Caco-2 (cell line): ENCODE measurements at regions of chr11 and their contacts with region 1.

Region 1: DNA sequence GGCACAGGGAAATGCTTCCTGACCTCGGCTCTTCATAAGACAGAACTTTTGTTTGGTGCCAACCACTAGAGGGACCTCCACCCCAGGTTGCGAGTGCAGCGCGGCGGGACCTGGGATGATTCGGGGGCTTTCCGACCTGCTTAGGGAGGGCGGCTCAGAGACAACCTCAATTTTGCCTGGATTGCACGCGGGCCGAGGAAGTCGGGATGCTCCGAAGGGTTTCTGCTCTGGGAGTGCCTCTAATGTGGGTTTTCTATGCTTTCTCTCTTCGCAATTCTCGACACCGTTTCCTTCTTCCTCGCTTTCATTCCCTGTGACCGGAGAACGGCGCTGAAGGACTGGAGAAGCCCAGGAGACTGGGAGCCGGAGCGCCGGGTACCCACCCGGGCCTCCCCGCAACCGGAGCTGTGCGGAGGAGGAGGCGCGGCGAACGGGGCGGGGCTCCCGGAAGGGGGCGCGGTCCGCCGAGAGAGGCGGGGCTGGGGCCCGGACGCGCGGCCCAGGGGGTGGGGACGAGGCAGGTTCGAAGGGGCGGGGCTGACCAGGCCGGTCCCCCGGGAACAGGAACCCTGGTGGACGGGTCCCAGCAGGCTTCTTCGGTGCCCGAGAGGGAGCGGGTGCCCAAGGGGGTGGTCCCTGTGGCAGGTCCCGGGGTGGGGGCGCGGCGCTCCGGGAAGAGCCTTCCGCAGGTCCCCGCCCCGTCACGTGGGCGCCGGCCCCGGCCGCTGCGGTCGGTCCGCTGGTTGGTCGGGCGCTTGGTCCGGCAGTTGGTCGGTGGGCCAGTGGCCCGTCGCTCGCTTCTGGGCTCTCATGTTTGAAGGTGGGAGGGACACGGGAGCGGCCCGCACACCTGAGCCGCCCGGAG is at the start of gene PPFIBP2:
- DNase-seq: peak; percentile 79 to 90
- H3K4me3 ChIP-seq: peak within 1 kb of the TSS; percentile 87
- H3K4me3 Mint-ChIP-seq: peak within 1 kb of the TSS; percentile 80
- H3K27ac Mint-ChIP-seq: no peak within 1 kb of the TSS
- H3K4me1 ChIP-seq: 0 out of 2 replicates have a peak, but pooled peaks cover 5% of the 10 kb centered on the region
- H3K4me1 Mint-ChIP-seq: peaks cover 16% of the 10 kb centered on the region
- H3K27me3 ChIP-seq: no peaks in the 10 kb centered on the region
- H3K27me3 Mint-ChIP-seq: no peaks in the 10 kb centered on the region
- CTCF ChIP-seq: peak; percentile 67 to 79
- total RNA-seq, gene PPFIBP2: 72.5 and 79.8 TPM in 2 replicates

Region 2: DNA sequence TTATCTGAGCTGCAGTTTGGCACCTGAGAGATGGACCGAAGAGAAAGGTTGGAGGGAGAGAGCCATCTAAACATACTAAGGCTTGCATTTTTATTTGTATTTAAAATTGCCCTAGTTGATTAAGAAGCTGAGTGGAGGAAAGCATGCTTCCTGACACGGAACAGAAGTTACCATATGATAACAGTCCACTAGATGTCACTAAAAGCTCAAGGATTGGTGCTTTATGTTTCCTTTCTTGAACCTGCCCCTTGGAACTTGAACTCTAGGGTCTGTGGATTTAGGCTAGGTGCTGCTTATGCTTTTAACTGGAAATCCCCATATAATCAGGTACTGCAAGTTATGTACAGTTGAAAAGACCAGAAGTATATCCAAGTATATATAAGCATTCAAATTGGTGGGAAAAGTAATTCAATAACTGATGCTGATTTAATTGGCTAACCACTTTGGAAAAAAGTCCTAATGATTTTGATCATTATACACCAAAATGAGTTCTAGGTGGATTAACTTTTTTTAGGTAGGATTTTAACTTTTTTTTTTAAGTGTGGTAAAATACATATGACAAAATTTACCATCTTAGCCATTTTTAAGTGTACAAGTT is 415.1 kb before region 1 on chr11:
- CTCF ChIA-PET with region 1: no interaction called
- POLR2A ChIA-PET with region 1: no interaction called
- intact Hi-C with region 1: no loop called
- DNase-seq: peak in 1 of 2 experiments; percentile 54
- H3K4me3 ChIP-seq: no peak overlapping the region
- H3K4me3 Mint-ChIP-seq: no peak overlapping the region
- H3K27ac Mint-ChIP-seq: no peak overlapping the region
- H3K4me1 ChIP-seq: no peaks in the 10 kb centered on the region
- H3K4me1 Mint-ChIP-seq: no peaks in the 10 kb centered on the region
- H3K27me3 ChIP-seq: no peaks in the 10 kb centered on the region
- H3K27me3 Mint-ChIP-seq: peaks cover 3% of the 10 kb centered on the region
- CTCF ChIP-seq: peak; percentile 55 to 62

Region 3: GRCh38 chr11:7538031-7538430 is 24.6 kb after region 1 on chr11:
- CTCF ChIA-PET with region 1: interaction called, 4 read pairs
- POLR2A ChIA-PET with region 1: interaction called, 3 read pairs
- intact Hi-C with region 1: loop called (anchors 1 kb)
- DNase-seq: no peak
- H3K4me3 ChIP-seq: no peak overlapping the region
- H3K4me3 Mint-ChIP-seq: no peak overlapping the region
- H3K27ac Mint-ChIP-seq: peak overlapping the region; percentile 58
- H3K4me1 ChIP-seq: peaks cover 44% of the 10 kb centered on the region
- H3K4me1 Mint-ChIP-seq: peaks cover 51% of the 10 kb centered on the region
- H3K27me3 ChIP-seq: no peaks in the 10 kb centered on the region
- H3K27me3 Mint-ChIP-seq: no peaks in the 10 kb centered on the region
- CTCF ChIP-seq: no peak

Region 4: GRCh38 chr11:7548659-7549274 is 35.3 kb after region 1 on chr11:
- CTCF ChIA-PET with region 1: interaction called, 4 read pairs
- POLR2A ChIA-PET with region 1: no interaction called
- intact Hi-C with region 1: loop called (anchors 1 kb)
- DNase-seq: peak; percentile 70 to 72
- H3K4me3 ChIP-seq: no peak overlapping the region
- H3K4me3 Mint-ChIP-seq: no peak overlapping the region
- H3K27ac Mint-ChIP-seq: no peak overlapping the region
- H3K4me1 ChIP-seq: peaks cover 13% of the 10 kb centered on the region
- H3K4me1 Mint-ChIP-seq: peaks cover 18% of the 10 kb centered on the region
- H3K27me3 ChIP-seq: no peaks in the 10 kb centered on the region
- H3K27me3 Mint-ChIP-seq: no peaks in the 10 kb centered on the region
- CTCF ChIP-seq: peak; percentile 62 to 86

Region 5: DNA sequence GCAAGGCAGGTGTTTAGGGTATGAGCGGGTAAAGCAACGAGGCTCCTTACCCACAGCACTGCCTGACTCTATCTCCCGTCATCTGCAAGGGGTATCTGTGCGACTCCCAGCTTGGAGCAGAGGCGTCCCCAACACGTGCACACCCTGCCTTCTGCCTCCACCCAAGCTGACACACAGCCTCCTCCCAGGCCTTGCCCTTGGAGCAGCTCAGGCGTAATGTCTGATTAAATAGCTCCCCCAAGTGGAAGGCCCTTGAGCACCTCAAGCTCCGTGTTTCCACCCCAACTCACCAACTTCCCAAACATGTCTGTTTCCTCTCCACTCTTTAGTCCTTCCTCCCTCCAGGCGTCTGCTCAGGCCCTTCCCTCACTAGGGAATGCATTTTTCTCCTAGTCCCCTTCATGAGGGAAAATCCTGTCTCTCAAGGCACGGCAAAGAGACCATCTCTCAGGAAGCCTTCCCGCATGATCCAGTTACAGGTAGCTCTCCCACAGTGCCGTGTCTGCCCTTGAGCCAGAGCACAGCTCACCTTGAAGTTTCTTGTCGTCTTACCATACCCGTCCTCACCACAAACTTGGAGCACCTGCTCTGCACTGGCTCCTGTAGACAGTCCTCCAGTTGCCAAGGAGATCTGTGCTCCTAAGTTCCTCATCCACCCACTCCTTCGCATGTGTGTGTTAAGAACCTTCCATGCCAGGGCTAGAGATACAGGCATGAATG is 144.0 kb after region 1 on chr11:
- CTCF ChIA-PET with region 1: no interaction called
- POLR2A ChIA-PET with region 1: no interaction called
- intact Hi-C with region 1: loop called (anchors 2 kb)
- DNase-seq: peak; percentile 52 to 53
- H3K4me3 ChIP-seq: no peak overlapping the region
- H3K4me3 Mint-ChIP-seq: no peak overlapping the region
- H3K27ac Mint-ChIP-seq: peak overlapping the region; percentile 7
- H3K4me1 ChIP-seq: no peaks in the 10 kb centered on the region
- H3K4me1 Mint-ChIP-seq: peaks cover under 1% of the 10 kb centered on the region
- H3K27me3 ChIP-seq: no peaks in the 10 kb centered on the region
- H3K27me3 Mint-ChIP-seq: no peaks in the 10 kb centered on the region
- CTCF ChIP-seq: peak; percentile 37 to 49

Region 6: DNA sequence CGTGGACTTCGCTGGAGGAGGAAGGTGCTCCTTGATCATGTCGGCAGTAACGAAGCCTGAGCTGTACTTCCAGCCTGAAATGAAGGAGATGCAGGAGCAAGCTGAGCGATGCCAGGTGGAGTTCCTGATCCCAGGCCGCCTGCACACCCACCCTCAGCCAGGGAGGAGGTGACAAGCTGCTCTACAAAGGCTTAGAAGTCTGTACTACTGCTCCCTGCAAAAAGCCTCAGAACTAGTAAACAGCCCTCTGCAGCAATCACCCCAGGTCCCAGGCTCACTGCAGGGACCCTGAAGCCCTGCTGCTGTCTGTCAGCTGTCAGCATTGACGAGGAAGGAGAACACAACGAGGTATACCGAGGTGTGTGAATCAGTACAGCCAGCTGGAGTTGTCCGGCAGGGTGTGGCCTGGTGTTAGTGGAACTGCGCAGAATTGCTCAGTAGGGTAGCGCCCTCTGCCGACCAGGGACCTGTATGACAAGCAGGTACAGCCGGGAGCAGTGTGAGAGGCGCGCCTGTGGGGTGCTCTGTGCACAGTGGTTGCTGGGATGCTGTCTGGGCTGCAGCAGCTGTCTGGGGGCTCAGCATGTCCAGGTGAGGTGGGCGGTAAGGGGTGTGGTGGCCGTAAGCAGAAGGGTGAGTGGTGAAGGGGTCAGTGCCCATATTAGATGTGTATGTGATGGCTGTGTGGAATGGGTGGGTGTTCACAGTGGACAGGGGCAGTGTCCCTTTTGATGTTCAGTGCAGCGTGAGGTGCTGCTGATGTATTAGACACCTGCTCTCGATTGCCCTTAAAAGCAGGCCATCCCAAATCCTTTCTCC is 152.2 kb after region 1 on chr11:
- CTCF ChIA-PET with region 1: interaction called, 14 read pairs
- POLR2A ChIA-PET with region 1: no interaction called
- intact Hi-C with region 1: loop called (anchors 1 kb)
- DNase-seq: peak; percentile 87 to 90
- H3K4me3 ChIP-seq: no peak overlapping the region
- H3K4me3 Mint-ChIP-seq: no peak overlapping the region
- H3K27ac Mint-ChIP-seq: peak overlapping the region; percentile 11
- H3K4me1 ChIP-seq: no peaks in the 10 kb centered on the region
- H3K4me1 Mint-ChIP-seq: peaks cover 12% of the 10 kb centered on the region
- H3K27me3 ChIP-seq: no peaks in the 10 kb centered on the region
- H3K27me3 Mint-ChIP-seq: no peaks in the 10 kb centered on the region
- CTCF ChIP-seq: peak; percentile 92 to 94